Activated naive CD4-positive, alpha-beta T cell treated with anti-CD3 and anti-CD28 coated beads for 36 hours (primary cell): ENCODE measurements at regions of chr20 and their contacts with region 1.

Region 1: GRCh38 chr20:21505161-21505809 is 8.6 kb downstream of the NKX2-2 start:
- DNase-seq: peak; percentile 82
- H3K4me3 Mint-ChIP-seq: peak overlapping the region; percentile 62
- H3K27ac Mint-ChIP-seq: no peak overlapping the region
- H3K4me1 Mint-ChIP-seq: peaks cover 28% of the 10 kb centered on the region
- H3K27me3 Mint-ChIP-seq: peaks cover 53% of the 10 kb centered on the region

Region 2: DNA sequence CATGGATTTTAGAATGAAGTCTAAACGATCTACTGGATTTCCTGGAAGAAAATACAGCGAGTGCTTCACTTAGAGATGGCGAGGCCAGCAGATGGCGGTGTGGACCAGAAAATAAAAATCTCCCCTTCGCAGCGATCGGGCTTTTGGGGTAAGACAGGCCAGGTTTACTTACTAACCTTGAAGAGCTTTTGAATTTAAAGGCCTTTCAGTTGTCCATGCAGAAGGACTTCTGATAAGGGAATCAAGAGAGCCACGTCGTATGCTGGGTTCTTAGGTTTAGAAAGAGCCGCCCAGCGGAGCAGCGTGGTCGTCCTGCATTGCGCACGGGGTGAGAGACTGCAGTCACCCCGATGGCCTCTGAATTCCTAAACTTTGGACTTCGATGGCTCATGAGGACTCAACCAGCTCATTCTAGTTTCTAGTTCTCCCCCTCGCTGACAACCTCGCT is 667.7 kb before region 1 on chr20:
- CTCF ChIA-PET with region 1: interaction called, 4 read pairs
- intact Hi-C with region 1: loop called (anchors 1 kb)
- DNase-seq: peak; percentile 67
- H3K4me3 Mint-ChIP-seq: no peak overlapping the region
- H3K27ac Mint-ChIP-seq: no peak overlapping the region
- H3K4me1 Mint-ChIP-seq: peaks cover 3% of the 10 kb centered on the region
- H3K27me3 Mint-ChIP-seq: peaks cover 7% of the 10 kb centered on the region

Region 3: GRCh38 chr20:21099751-21100577 is 405.3 kb before region 1 on chr20:
- CTCF ChIA-PET with region 1: interaction called, 4 read pairs
- intact Hi-C with region 1: loop called (anchors 2 kb)
- DNase-seq: peak; percentile 65
- H3K4me3 Mint-ChIP-seq: peak overlapping the region; percentile 78
- H3K27ac Mint-ChIP-seq: no peak overlapping the region
- H3K4me1 Mint-ChIP-seq: peaks cover 32% of the 10 kb centered on the region
- H3K27me3 Mint-ChIP-seq: peaks cover 75% of the 10 kb centered on the region

Region 4: DNA sequence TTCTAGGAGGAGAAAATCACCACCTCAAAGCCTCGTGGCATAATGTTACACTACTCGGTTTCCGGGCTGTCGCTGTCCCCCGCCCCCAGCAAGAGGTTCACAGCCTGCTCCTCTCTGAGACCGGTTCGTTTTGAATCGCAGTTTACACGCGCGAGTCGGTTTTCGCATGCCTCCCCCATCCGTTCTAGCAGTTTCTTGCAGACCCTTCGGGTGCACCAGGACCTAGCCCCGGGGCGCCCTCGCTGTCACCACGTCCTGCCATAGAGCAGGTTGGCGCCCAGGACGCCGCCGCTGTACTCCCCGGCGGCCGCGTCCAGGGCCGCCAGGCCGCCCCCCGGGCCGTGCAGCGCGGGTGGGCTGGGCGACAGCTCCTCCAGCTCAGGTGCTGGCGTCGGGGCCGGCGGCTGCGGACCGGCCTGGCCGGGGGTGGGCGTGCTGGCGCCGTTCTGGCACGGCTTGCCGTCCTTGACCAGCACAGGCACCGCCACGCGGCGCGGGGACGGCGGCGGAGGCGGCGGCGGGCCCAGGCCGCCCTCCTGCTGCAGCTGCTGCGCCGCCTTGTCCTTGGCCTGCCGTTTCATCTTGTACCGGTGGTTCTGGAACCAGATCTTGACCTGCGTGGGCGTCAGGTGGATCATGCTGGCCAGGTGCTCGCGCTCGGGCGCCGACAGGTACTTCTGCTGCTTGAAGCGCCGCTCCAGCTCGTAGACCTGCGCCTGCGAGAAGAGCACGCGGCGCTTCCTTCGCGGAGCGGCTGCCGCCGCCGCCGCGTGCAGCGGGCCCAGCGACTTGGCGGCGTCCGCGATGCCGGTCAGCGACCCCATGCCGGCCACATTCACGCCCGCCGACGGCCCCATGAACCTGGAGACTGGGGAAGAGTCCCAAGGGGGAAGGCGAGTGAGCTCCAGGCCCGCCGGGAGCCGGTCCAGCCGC is 109.4 kb before region 1 on chr20:
- CTCF ChIA-PET with region 1: interaction called, 3 read pairs
- intact Hi-C with region 1: loop called (anchors 2 kb)
- DNase-seq: peak; percentile 54
- H3K4me3 Mint-ChIP-seq: peak overlapping the region; percentile 50
- H3K27ac Mint-ChIP-seq: no peak overlapping the region
- H3K4me1 Mint-ChIP-seq: peaks cover 18% of the 10 kb centered on the region
- H3K27me3 Mint-ChIP-seq: peaks cover 71% of the 10 kb centered on the region

Region 5: GRCh38 chr20:21615617-21616080 is 110.4 kb after region 1 on chr20:
- CTCF ChIA-PET with region 1: interaction called, 4 read pairs
- intact Hi-C with region 1: loop called (anchors 1 kb)
- DNase-seq: peak; percentile 73
- H3K4me3 Mint-ChIP-seq: no peak overlapping the region
- H3K27ac Mint-ChIP-seq: no peak overlapping the region
- H3K4me1 Mint-ChIP-seq: no peaks in the 10 kb centered on the region
- H3K27me3 Mint-ChIP-seq: peaks cover 42% of the 10 kb centered on the region